ENCODE measurements at regions of chr2 and their contacts with region 1.

Region 1: GRCh38 chr2:165293440-165294353 is 54.5 kb downstream of the SCN2A start:
- DNase-seq: peak; percentile 39
- H3K4me3 Mint-ChIP-seq: no peak overlapping the region
- H3K27ac Mint-ChIP-seq: no peak overlapping the region
- H3K4me1 Mint-ChIP-seq: peaks cover 2% of the 10 kb centered on the region
- H3K27me3 Mint-ChIP-seq: peaks cover 9% of the 10 kb centered on the region

Region 2: DNA sequence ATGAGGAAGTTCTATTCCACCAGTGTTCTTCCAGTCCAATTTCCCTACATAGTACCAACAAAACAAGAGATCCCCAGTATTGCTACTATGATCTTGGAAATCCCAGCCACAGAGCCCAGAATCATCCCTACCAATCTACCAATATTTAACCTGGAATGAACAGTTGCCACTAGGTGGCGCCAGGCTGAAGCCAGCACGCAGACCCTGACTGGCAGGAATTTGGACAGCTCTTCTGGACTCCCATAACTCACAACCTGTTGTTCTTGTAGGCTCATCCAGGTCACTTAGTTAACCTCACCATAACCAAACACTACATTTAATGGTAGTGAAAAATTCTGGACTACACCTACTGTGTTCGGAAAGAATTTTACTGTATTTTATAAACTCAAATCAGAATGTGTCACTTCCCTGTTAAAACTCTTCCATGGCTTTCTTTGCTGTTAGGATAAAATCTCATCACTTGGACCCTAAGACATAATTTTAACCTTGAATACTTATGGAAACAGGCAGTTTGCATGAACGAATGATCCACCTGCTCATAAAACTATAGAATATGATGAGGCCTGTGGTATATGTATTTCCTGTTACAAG is 278.6 kb before region 1 on chr2:
- intact Hi-C with region 1: loop called (anchors 5 kb)
- DNase-seq: peak; percentile 33
- H3K4me3 Mint-ChIP-seq: no peak overlapping the region
- H3K27ac Mint-ChIP-seq: no peak overlapping the region
- H3K4me1 Mint-ChIP-seq: no peaks in the 10 kb centered on the region
- H3K27me3 Mint-ChIP-seq: peaks cover 2% of the 10 kb centered on the region

Region 3: GRCh38 chr2:165239230-165239629 is 54.5 kb before region 1 on chr2 and contains the start of gene SCN2A:
- intact Hi-C with region 1: loop called (anchors 1 kb)
- DNase-seq: no peak
- H3K4me3 Mint-ChIP-seq: no peak within 1 kb of the TSS
- H3K27ac Mint-ChIP-seq: no peak within 1 kb of the TSS
- H3K4me1 Mint-ChIP-seq: no peaks in the 10 kb centered on the region
- H3K27me3 Mint-ChIP-seq: no peaks in the 10 kb centered on the region
- total RNA-seq, gene SCN2A: 0.05 TPM in 1 of 2 replicates, not detected in the other

Region 4: DNA sequence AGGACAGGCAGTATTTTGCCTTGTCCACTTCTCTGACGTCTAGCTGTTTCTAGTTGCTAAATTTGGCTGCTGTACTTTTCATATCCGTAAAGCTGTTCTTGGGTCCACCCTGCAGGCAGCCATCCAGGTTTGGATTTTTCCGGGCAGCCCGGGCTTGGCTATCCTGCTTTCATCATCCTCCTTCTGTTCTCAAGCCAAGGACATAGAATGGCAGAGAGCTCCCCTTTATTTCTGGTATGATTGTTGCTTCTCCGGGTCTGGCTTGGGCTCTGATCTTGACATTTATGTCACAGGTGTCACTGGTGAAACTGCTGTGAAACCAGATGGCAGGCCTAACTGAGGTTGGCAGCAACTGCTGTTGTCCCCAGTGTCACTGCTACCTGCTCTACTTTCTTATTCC is 19.0 kb before region 1 on chr2:
- intact Hi-C with region 1: no loop called
- DNase-seq: no peak
- H3K4me3 Mint-ChIP-seq: no peak overlapping the region
- H3K27ac Mint-ChIP-seq: no peak overlapping the region
- H3K4me1 Mint-ChIP-seq: peaks cover 8% of the 10 kb centered on the region
- H3K27me3 Mint-ChIP-seq: no peaks in the 10 kb centered on the region

Region 5: DNA sequence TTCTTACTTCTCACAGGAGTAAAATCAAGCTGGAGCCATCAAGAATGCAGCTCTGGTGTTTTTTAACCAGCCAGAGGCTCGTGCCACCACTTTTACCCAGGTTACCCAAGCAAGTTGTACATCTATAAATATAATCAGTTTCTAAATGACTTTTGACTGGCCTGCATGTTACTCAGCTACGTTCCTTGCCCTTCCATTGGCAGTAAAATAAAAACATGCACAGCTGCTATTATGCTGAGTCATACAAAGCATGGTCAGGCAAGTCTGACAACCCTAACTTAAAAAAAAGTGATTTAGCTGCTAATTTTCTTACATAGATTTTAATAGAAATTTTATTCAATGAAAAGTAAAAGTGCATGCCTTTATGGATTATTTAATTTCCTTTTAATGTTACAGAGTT is 64.1 kb after region 1 on chr2:
- intact Hi-C with region 1: no loop called
- DNase-seq: no peak
- H3K4me3 Mint-ChIP-seq: no peak overlapping the region
- H3K27ac Mint-ChIP-seq: no peak overlapping the region
- H3K4me1 Mint-ChIP-seq: no peaks in the 10 kb centered on the region
- H3K27me3 Mint-ChIP-seq: no peaks in the 10 kb centered on the region